H1 (cell line): ENCODE measurements at regions of chr1 and their contacts with region 1.

Region 1: GRCh38 chr1:210311726-210312493 is 16.8 kb upstream of the HHAT start:
- DNase-seq: no peak
- H3K4me3 ChIP-seq: peak overlapping the region; percentile 36 to 62 (median 44); a peak in 7 of 8 replicates
- H3K27ac ChIP-seq: no peak overlapping the region
- H3K4me1 ChIP-seq: peaks cover 0 to 4% (median 0%) of the 10 kb centered on the region in 4 experiments; a peak in 1 of 7 replicates
- H3K27me3 ChIP-seq: peaks cover 0 to 7% (median 4%) of the 10 kb centered on the region in 4 experiments; a peak in 6 of 7 replicates
- CTCF ChIP-seq: no peak
- EP300 ChIP-seq: no peak
- POLR2A ChIP-seq: no peak
- RAD21 ChIP-seq: no peak

Region 2: GRCh38 chr1:210061992-210062391 is 249.9 kb before region 1 on chr1:
- CTCF ChIA-PET with region 1: no interaction called
- POLR2A ChIA-PET with region 1: no interaction called
- DNase-seq: no peak
- H3K4me3 ChIP-seq: no peak overlapping the region
- H3K27ac ChIP-seq: no peak overlapping the region
- H3K4me1 ChIP-seq: no peaks in the 10 kb centered on the region
- H3K27me3 ChIP-seq: no peaks in the 10 kb centered on the region
- CTCF ChIP-seq: no peak
- EP300 ChIP-seq: no peak
- POLR2A ChIP-seq: no peak
- RAD21 ChIP-seq: no peak

Region 3: GRCh38 chr1:210123924-210124589 is 187.9 kb before region 1 on chr1:
- CTCF ChIA-PET with region 1: no interaction called
- POLR2A ChIA-PET with region 1: no interaction called
- DNase-seq: no peak
- H3K4me3 ChIP-seq: no peak overlapping the region
- H3K27ac ChIP-seq: no peak overlapping the region
- H3K4me1 ChIP-seq: peaks cover 0 to 2% (median 0%) of the 10 kb centered on the region in 4 experiments; a peak in 1 of 7 replicates
- H3K27me3 ChIP-seq: no peaks in the 10 kb centered on the region
- CTCF ChIP-seq: no peak
- EP300 ChIP-seq: no peak
- POLR2A ChIP-seq: no peak
- RAD21 ChIP-seq: no peak

Region 4: GRCh38 chr1:210143465-210144062 is 168.3 kb before region 1 on chr1:
- CTCF ChIA-PET with region 1: interaction called, 31 read pairs
- POLR2A ChIA-PET with region 1: no interaction called
- DNase-seq: peak; percentile 13 to 77
- H3K4me3 ChIP-seq: no peak overlapping the region
- H3K27ac ChIP-seq: no peak overlapping the region
- H3K4me1 ChIP-seq: no peaks in the 10 kb centered on the region
- H3K27me3 ChIP-seq: no peaks in the 10 kb centered on the region
- CTCF ChIP-seq: peak in 2 of 3 experiments; percentile 38 to 42; a peak in 2 of 4 replicates
- EP300 ChIP-seq: no peak
- POLR2A ChIP-seq: no peak
- RAD21 ChIP-seq: peak; percentile 65 to 72

Region 5: GRCh38 chr1:210239349-210240111 is 72.4 kb before region 1 on chr1:
- CTCF ChIA-PET with region 1: interaction called, 35 read pairs
- POLR2A ChIA-PET with region 1: no interaction called
- DNase-seq: no peak
- H3K4me3 ChIP-seq: no peak overlapping the region
- H3K27ac ChIP-seq: no peak overlapping the region
- H3K4me1 ChIP-seq: peaks cover 0 to 14% (median 6%) of the 10 kb centered on the region in 4 experiments; a peak in 5 of 7 replicates
- H3K27me3 ChIP-seq: peaks cover 0 to 20% (median 6%) of the 10 kb centered on the region in 4 experiments; a peak in 4 of 7 replicates
- CTCF ChIP-seq: peak; percentile 58 to 68 (median 60)
- EP300 ChIP-seq: no peak
- POLR2A ChIP-seq: no peak
- RAD21 ChIP-seq: peak; percentile 55 to 62

Region 6: GRCh38 chr1:210272666-210273065 is 39.2 kb before region 1 on chr1:
- CTCF ChIA-PET with region 1: interaction called, 11 read pairs
- POLR2A ChIA-PET with region 1: no interaction called
- DNase-seq: peak in 1 of 2 experiments; percentile 61
- H3K4me3 ChIP-seq: no peak overlapping the region
- H3K27ac ChIP-seq: no peak overlapping the region
- H3K4me1 ChIP-seq: peaks cover 3 to 15% (median 10%) of the 10 kb centered on the region in 4 experiments; a peak in 6 of 7 replicates
- H3K27me3 ChIP-seq: no peaks in the 10 kb centered on the region
- CTCF ChIP-seq: no peak
- EP300 ChIP-seq: no peak
- POLR2A ChIP-seq: no peak
- RAD21 ChIP-seq: 0 out of 4 replicates have a peak, but pooled peaks of 1 of the 2 experiments have one; percentile 6

Region 7: DNA sequence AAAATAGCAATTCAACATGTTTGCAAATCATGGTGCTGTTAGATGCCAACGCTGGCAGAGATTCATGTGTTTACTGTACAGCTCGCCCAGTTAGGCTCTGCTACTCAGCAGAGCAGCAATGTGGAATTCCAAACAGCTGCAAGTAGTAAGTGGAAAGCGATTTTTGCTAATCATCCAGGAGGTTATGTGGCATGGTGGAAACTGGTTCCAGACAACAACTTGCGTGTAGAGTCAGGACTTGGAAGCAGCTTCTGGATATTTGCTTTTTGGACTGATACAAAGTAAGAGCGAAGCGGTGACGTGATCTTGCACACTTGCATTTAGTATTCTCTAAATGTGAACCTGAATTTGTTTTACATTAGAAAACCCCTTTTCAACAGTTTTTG is 10.3 kb before region 1 on chr1:
- CTCF ChIA-PET with region 1: interaction called, 43 read pairs
- POLR2A ChIA-PET with region 1: no interaction called
- DNase-seq: no peak
- H3K4me3 ChIP-seq: no peak overlapping the region
- H3K27ac ChIP-seq: no peak overlapping the region
- H3K4me1 ChIP-seq: peaks cover 0 to 3% (median 0%) of the 10 kb centered on the region in 4 experiments; a peak in 1 of 7 replicates
- H3K27me3 ChIP-seq: no peaks in the 10 kb centered on the region
- CTCF ChIP-seq: no peak
- EP300 ChIP-seq: no peak
- POLR2A ChIP-seq: no peak
- RAD21 ChIP-seq: no peak

Region 8: DNA sequence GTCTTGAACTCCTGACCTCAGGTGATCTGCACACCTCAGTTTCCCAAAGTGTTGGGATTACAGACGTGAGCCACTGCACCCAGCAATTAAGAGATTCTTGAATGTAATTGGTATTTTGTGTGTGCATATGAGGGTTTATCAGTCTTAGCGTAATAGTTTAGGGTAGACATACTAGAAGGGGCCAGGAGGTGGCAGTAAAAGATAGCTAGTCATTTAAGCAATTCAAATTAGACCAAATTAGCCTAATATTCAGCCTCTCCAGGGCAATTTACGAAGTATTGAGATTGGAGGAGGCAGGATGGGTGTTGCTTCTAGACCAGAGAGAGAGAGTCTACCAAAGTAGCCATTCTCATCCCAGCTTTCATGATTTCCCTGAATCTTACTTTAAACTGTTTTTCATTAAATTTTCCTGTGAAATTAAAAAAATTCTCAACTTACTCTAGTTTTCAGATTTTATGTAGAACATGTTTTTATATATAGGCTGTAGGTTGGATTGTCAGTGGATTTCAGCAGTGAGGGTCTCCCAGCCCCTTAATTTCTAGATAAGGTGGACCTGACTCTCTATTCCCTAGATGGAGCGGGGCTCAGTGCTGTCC is 136.5 kb after region 1 on chr1:
- CTCF ChIA-PET with region 1: no interaction called
- POLR2A ChIA-PET with region 1: no interaction called
- DNase-seq: no peak
- H3K4me3 ChIP-seq: no peak overlapping the region
- H3K27ac ChIP-seq: no peak overlapping the region
- H3K4me1 ChIP-seq: peaks cover 0 to 5% (median 0%) of the 10 kb centered on the region in 4 experiments; a peak in 1 of 7 replicates
- H3K27me3 ChIP-seq: no peaks in the 10 kb centered on the region; a peak in 1 of 7 replicates
- CTCF ChIP-seq: peak in 2 of 3 experiments; percentile 55 to 76; a peak in 2 of 4 replicates
- EP300 ChIP-seq: no peak
- POLR2A ChIP-seq: no peak
- RAD21 ChIP-seq: peak; percentile 89 to 90

Region 9: GRCh38 chr1:210573141-210573540 is 261.2 kb after region 1 on chr1:
- CTCF ChIA-PET with region 1: no interaction called
- POLR2A ChIA-PET with region 1: no interaction called
- DNase-seq: no peak
- H3K4me3 ChIP-seq: no peak overlapping the region
- H3K27ac ChIP-seq: no peak overlapping the region
- H3K4me1 ChIP-seq: no peaks in the 10 kb centered on the region
- H3K27me3 ChIP-seq: no peaks in the 10 kb centered on the region
- CTCF ChIP-seq: no peak
- EP300 ChIP-seq: no peak
- POLR2A ChIP-seq: no peak
- RAD21 ChIP-seq: no peak